ENCODE measurements at regions of chr13 and their contacts with region 1.

Region 1: DNA sequence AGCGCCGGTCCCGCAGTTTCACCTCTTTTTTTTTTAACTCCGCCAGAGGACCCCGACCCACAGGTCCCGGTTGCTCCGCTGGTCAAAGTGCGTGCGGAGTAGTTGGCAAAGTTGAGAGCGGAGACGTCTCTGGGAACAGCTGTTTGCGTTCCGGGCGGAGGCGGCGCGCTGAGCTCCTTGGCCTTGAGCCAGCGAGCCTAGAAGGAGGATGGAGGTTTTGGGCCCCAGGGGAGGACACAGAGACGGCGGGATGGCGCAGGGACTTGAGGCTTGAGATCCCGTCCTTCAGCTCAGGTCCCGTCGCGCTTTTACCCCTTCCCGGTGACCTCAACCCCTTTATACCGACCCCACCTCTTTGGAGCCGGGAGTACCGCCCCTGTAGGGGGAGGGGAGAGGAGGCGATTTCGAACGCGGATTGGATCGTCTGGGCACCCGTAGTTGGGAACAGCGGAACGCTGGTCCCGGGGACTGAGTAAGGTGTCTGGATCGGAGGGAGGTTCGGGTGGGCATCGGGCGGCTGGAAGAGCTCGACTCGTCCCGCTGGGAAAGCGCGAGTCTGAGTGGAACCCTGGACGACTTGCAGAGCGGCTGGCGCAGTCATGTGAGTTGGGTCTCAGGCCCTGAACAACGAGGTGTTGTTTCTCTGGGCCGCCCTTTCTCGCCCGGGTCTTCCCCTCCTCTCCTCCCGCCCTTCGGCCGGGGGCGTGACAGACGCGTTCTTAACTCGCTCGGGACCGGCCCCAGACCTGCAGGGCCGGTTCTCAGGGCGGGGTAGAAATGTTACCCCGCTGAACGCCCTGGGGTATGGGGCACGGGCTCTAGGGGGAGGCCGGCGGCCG is at the start of gene WBP4:
- DNase-seq: peak; percentile 74 to 96
- H3K4me3 ChIP-seq: peak within 1 kb of the TSS; percentile 81 to 93
- H3K27ac ChIP-seq: peak within 1 kb of the TSS; percentile 97 to 99
- H3K4me1 ChIP-seq: peaks cover 25 to 45% of the 10 kb centered on the region in 2 donors
- H3K27me3 ChIP-seq: no peaks in the 10 kb centered on the region
- CTCF ChIP-seq: peak in 2 of 3 experiments; percentile 19 to 25
- total RNA-seq, gene WBP4: 0.96 TPM

Region 2: DNA sequence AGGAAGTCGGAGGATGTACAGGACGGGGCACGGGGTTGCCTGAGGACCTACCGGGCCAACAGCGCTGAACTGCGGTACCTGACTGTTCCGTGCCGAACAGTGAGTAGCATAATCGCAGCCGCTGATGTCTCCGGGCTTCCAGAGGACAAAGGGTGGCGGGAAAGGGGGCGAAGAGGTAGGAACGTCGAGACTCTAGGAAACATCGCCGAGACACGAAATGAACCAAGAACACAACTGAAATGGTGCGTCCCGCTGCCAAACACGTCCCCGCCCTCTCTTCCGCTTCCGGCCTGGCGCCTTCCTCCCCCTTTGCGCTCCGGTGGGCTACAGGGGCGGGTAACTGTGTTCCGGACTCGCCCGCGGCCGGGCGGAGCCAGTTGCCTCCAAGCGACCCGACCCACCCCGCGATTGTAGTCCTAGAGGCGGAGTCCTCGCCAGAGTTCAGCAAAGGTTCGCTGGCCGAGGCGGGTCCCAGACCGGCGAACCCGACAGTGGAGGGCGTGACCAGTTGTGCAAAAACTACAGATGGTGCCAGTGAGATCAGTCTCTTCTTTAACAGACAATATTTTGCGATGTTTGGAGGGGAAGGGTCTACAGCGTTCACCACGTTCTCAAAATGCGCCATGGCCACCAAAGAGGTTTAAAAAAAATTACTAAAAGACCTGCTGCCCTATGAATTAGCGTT is 290.2 kb before region 1 on chr13 and contains the start of gene MRPS31:
- intact Hi-C with region 1: loop called (anchors 5 kb)
- DNase-seq: peak; percentile 81 to 97
- H3K4me3 ChIP-seq: peak within 1 kb of the TSS; percentile 59 to 75
- H3K27ac ChIP-seq: peak within 1 kb of the TSS; percentile 71 to 83
- H3K4me1 ChIP-seq: peaks cover 0 to 6% of the 10 kb centered on the region in 2 donors
- H3K27me3 ChIP-seq: no peaks in the 10 kb centered on the region
- CTCF ChIP-seq: peak in 1 of 3 experiments; percentile 2
- total RNA-seq, gene MRPS31: 22.8 TPM

Region 3: GRCh38 chr13:40982772-40983171 is 78.5 kb before region 1 on chr13:
- intact Hi-C with region 1: loop called (anchors 2 kb)
- DNase-seq: no peak
- H3K4me3 ChIP-seq: peak overlapping the region; percentile 25 to 41
- H3K27ac ChIP-seq: peak overlapping the region; percentile 73 to 75
- H3K4me1 ChIP-seq: peaks cover 7 to 21% of the 10 kb centered on the region in 2 donors
- H3K27me3 ChIP-seq: no peaks in the 10 kb centered on the region
- CTCF ChIP-seq: no peak

Region 4: DNA sequence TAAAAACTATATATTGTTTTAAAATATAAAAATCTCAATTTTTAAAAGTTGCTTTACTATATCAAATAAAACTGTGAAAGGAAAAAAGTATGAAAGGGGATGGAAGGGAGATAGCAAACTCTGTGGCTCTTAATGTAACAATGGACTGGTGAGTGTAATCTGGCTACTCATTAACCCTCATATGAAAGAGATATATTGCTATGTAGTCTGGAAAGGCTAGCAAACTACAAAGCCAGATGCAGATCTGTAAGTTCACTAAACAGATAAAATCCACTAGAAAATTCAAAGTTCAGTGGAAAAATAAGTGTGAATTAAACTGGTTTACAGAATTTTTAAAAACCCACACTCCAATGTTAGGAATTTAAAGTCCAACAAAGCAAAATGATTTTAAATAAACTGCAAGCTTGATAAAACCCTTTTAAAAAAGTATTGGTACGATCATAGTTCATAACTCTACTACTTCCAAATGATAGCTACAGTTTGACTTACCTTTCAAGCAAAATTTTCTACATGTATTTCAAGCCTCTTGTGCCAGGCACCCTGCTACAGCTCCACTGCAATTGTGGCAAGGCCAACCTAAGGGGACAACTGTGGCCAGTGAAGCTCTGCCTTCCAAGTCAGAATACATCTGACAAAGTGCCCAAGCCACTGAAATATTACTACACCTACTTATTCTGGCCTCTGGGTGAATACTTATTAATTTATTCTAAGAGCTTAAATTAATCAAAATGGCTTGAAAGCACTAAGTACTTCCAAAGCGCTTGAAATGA is 41.5 kb before region 1 on chr13:
- intact Hi-C with region 1: no loop called
- DNase-seq: no peak
- H3K4me3 ChIP-seq: no peak overlapping the region
- H3K27ac ChIP-seq: peak overlapping the region in 1 of 2 donors; percentile 5
- H3K4me1 ChIP-seq: peaks cover 3 to 4% of the 10 kb centered on the region in 2 donors
- H3K27me3 ChIP-seq: no peaks in the 10 kb centered on the region
- CTCF ChIP-seq: no peak

Region 5: GRCh38 chr13:41040606-41041319 is 20.5 kb before region 1 on chr13:
- intact Hi-C with region 1: no loop called
- DNase-seq: no peak
- H3K4me3 ChIP-seq: no peak overlapping the region
- H3K27ac ChIP-seq: no peak overlapping the region
- H3K4me1 ChIP-seq: peaks cover 0 to 3% of the 10 kb centered on the region in 2 donors
- H3K27me3 ChIP-seq: no peaks in the 10 kb centered on the region
- CTCF ChIP-seq: no peak

Region 6: DNA sequence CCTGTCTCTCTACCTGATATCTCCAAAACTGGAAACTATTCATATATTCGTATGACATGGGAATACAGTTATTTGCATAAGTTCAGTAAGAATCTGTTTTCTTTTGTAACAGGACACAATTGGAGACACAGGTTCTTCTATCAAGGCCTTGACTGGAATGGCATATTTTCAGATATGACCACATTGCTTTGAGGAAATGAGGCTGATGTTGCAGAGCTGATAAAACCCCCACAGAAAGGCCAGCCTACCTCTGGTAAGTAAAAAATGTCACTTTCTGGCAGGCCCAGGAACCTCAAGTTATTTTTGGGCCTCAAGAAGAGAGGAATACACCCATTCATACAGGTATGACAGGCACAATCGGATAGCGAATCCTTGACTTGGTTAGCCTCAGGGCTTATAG is 100.9 kb after region 1 on chr13:
- intact Hi-C with region 1: no loop called
- DNase-seq: no peak
- H3K4me3 ChIP-seq: no peak overlapping the region
- H3K27ac ChIP-seq: no peak overlapping the region
- H3K4me1 ChIP-seq: no peaks in the 10 kb centered on the region
- H3K27me3 ChIP-seq: no peaks in the 10 kb centered on the region
- CTCF ChIP-seq: no peak

Region 7: DNA sequence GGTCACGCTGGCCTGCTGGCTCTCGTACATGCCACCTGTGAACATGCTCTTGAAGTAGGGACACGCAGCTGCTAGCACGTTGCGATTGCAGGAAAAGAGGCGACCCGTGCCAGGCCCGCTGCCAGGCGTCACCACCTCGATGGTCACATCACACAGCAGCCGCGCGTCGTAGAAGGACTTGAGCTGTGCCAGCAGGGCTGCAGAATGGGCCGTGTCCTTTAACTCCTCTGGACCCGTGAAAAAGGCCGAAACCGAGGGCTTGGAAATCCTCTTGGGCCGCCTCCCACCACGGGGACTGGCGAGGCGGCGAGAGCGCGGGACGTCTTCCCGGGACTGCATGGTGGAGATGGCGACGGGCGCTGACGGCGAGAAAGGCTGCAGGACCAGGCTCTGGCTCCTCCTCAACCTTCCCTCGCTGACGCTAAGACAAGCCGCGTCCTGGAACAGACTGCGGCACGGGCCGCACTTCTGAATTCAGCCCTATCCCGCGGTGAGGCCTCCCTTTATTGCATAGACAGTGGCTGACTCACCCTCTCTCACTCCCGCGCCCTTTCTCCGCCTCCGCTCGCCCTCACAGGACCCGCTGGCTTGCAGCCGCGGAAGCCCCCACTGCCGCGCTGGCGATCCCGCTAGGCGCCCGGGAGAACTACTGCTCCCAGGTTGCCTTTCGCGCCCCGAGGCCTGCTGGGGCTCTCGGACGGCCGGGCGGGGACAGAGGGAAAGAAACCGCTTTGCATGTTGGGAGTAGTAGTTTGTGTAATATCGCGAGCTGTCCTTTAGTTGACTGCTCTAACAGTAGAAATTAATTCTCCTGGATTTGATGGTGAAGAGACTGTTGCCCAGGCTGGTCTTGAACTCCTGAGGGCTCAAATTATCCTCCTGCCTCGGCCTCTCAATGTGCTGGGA is 132.9 kb after region 1 on chr13 and contains the start of gene KBTBD7:
- intact Hi-C with region 1: loop called (anchors 5 kb)
- DNase-seq: peak; percentile 76 to 97
- H3K4me3 ChIP-seq: peak within 1 kb of the TSS; percentile 70 to 94
- H3K27ac ChIP-seq: peak within 1 kb of the TSS; percentile 78 to 86
- H3K4me1 ChIP-seq: peaks cover 0 to 8% of the 10 kb centered on the region in 2 donors
- H3K27me3 ChIP-seq: no peaks in the 10 kb centered on the region
- CTCF ChIP-seq: peak in 2 of 3 experiments; percentile 5 to 11
- total RNA-seq, gene KBTBD7: 2.1 TPM

Region 8: GRCh38 chr13:41310963-41311606 is 249.8 kb after region 1 on chr13 and contains the start of gene NAA16:
- intact Hi-C with region 1: loop called (anchors 5 kb)
- DNase-seq: peak; percentile 53 to 95
- H3K4me3 ChIP-seq: peak within 1 kb of the TSS; percentile 92 to 94
- H3K27ac ChIP-seq: peak within 1 kb of the TSS; percentile 93 to 96
- H3K4me1 ChIP-seq: peaks cover 0 to 12% of the 10 kb centered on the region in 2 donors
- H3K27me3 ChIP-seq: no peaks in the 10 kb centered on the region
- CTCF ChIP-seq: peak; percentile 2 to 8 (median 4)
- total RNA-seq, gene NAA16: 11.9 TPM

Region 9: DNA sequence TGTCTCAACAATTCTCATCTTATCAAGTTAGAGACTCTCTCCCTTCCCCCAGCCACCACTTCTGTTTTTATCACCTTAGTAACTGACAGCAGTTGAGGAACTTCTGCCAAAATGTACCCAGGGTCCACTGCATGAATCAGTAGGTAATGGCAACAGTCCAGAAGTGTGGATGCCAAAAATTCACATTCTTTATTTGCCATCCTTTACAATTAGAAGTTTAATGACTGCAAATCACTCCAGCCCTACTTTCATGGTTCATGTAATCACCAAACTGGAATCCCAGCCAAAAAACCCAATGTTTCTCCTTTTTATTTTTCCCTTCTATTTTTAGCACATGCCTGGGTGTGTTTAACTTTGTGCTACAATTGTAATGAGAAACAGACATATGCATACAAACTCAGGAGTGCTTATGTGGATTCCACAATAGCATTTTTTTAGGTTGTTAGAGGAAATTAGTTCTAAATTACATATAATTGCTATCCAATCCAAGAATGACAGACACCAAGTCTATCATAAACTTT is 639.6 kb after region 1 on chr13:
- intact Hi-C with region 1: loop called (anchors 10 kb)
- DNase-seq: no peak
- H3K4me3 ChIP-seq: peak overlapping the region in 1 of 2 donors; percentile 21
- H3K27ac ChIP-seq: peak overlapping the region; percentile 37 to 50
- H3K4me1 ChIP-seq: peaks cover 4 to 37% of the 10 kb centered on the region in 2 donors
- H3K27me3 ChIP-seq: no peaks in the 10 kb centered on the region
- CTCF ChIP-seq: no peak

Region 10: GRCh38 chr13:42271337-42272114 is 1210.2 kb after region 1 on chr13:
- intact Hi-C with region 1: loop called (anchors 5 kb)
- DNase-seq: peak; percentile 88 to 98
- H3K4me3 ChIP-seq: peak overlapping the region; percentile 82 to 91
- H3K27ac ChIP-seq: peak overlapping the region; percentile 86 to 94
- H3K4me1 ChIP-seq: peaks cover 3 to 5% of the 10 kb centered on the region in 2 donors
- H3K27me3 ChIP-seq: no peaks in the 10 kb centered on the region
- CTCF ChIP-seq: no peak